ENCODE measurements at regions of chr20 and their contacts with region 1.

Region 1: DNA sequence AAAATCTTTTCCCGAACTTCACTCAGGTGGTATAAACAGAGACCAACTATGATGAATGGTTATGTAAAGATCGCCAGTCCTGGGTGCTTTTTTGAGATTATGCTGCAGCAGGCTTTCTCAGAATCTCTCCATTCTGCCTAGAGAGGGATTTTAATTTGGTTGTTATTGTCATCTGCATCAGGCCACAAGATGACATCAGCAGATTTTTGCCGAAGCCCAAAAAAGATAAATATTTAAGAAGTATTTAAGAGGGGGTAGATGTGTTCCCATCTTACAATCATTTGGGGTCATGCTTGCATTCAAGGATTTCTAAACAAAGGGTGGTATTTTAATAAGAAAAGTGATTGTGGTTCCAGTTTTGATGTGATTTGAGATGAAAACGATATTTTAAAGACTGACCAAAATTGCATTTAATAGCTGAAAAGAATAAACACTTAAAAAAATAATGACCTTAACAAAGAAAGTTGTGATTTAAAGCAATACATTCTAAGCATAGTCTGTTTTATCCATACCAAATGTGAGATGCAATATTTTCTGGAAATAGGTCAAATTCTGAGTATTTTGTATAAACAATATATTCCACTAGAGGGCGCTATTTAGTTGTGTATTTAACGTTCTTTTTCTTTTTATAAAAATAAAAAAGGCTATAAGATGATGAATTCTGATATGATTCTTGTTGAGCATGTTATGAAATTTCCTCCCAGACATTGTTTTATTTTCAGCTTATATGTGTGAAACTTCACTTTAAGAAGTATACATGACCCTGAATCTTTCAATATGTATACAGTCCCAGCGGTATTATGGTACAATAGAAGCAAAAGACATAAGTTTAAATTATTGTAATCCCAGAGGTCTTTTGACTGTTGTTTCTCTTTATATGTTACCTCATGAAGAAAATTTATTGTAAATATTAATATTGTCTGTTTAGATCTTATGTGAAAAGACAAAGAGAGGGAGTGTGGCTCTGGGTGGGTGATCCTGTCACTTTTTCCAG is 51.0 kb upstream of the ZFP64 start:
- DNase-seq: peak; percentile 16
- H3K4me3 Mint-ChIP-seq: no peak overlapping the region
- H3K27ac Mint-ChIP-seq: no peak overlapping the region
- H3K4me1 Mint-ChIP-seq: no peaks in the 10 kb centered on the region
- H3K27me3 Mint-ChIP-seq: peaks cover 26% of the 10 kb centered on the region
- CTCF ChIP-seq: peak; percentile 48

Region 2: DNA sequence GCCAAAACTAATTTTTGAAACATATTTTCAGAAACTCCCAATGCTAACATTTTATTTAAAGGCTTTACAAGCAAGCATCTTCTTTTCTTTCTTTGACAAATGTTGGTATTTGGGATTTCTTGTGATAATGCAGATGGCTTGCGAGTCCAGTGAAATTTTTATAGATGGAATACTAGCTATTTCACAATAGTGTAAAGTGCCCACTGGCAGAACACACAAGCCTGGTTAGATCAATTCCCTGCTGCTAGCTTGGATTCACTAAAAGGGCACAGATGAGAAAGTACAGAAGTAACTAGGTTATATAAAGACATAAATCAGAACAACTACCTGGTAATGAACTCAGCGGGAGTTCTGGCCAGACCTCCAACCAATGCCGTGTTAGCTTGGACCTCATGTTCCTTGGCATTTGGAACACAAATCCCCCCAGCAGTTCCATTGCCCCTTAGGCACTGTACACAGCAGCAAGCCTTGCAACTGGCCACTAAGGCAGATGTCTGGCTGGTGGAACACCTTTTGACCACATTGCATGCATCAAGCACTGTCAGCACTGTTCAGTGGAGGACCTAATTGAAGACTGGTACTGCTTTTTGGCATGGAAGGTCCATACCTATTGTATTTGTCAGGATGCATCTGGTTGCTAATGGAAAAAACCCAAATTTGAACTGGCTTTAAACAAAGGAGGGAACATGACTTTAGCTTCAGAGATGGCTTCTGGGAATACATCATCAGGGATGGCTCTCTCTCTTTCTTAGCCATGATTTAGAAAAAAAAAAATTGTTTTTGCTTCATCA is 35.3 kb before region 1 on chr20:
- CTCF ChIA-PET with region 1: interaction called, 12 read pairs
- POLR2A ChIA-PET with region 1: no interaction called
- intact Hi-C with region 1: no loop called
- DNase-seq: no peak
- H3K4me3 Mint-ChIP-seq: no peak overlapping the region
- H3K27ac Mint-ChIP-seq: no peak overlapping the region
- H3K4me1 Mint-ChIP-seq: no peaks in the 10 kb centered on the region
- H3K27me3 Mint-ChIP-seq: peaks cover 22% of the 10 kb centered on the region
- CTCF ChIP-seq: no peak

Region 3: GRCh38 chr20:52379723-52380336 is 137.3 kb after region 1 on chr20:
- CTCF ChIA-PET with region 1: interaction called, 8 read pairs
- POLR2A ChIA-PET with region 1: no interaction called
- intact Hi-C with region 1: loop called (anchors 1 kb)
- DNase-seq: peak; percentile 36
- H3K4me3 Mint-ChIP-seq: no peak overlapping the region
- H3K27ac Mint-ChIP-seq: no peak overlapping the region
- H3K4me1 Mint-ChIP-seq: no peaks in the 10 kb centered on the region
- H3K27me3 Mint-ChIP-seq: peaks cover 21% of the 10 kb centered on the region
- CTCF ChIP-seq: peak; percentile 88

Region 4: DNA sequence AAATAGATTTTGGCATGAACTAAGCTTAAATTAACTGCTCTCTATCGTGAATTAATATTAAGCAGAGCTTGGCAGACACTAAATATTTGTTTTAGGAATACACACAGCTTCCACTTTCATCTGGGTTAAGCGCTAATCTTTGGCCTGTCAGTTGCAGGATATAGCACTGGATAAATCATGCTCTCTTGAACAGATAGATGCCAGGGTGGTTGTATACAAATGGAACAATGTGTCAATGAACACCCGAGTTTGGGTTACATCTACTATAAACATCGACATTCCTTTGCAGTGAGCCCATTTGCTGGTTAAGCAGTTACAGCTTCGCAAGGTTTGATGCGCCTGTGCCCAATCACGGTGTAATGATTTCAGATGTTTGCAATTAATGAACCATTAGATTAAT is 287.3 kb after region 1 on chr20:
- CTCF ChIA-PET with region 1: no interaction called
- POLR2A ChIA-PET with region 1: no interaction called
- intact Hi-C with region 1: no loop called
- DNase-seq: no peak
- H3K4me3 Mint-ChIP-seq: no peak overlapping the region
- H3K27ac Mint-ChIP-seq: no peak overlapping the region
- H3K4me1 Mint-ChIP-seq: no peaks in the 10 kb centered on the region
- H3K27me3 Mint-ChIP-seq: no peaks in the 10 kb centered on the region
- CTCF ChIP-seq: no peak

Region 5: DNA sequence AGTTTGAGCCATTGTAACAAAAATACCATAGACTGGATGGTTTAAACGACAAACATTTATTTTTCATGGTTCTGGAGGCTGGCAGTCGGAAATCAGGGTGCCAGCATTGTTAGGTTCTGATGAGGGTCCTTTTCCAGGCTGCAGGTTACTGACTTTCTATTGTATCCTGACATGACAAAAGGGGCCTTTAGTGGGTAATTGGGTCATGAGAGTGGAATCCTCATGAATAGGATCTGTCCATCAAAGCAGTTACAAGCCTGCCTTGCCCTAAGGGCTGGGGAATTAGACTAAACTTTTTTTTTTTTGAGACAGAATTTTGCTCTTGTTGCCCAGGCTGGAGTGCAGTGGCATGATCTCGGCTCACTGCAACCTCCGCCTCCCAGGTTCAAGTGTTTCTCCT is 381.7 kb after region 1 on chr20:
- CTCF ChIA-PET with region 1: no interaction called
- POLR2A ChIA-PET with region 1: no interaction called
- intact Hi-C with region 1: no loop called
- DNase-seq: no peak
- H3K4me3 Mint-ChIP-seq: no peak overlapping the region
- H3K27ac Mint-ChIP-seq: no peak overlapping the region
- H3K4me1 Mint-ChIP-seq: no peaks in the 10 kb centered on the region
- H3K27me3 Mint-ChIP-seq: no peaks in the 10 kb centered on the region
- CTCF ChIP-seq: no peak

Measured in MCF 10A (cell line).